Prostate gland (tissue), 2 donors: ENCODE measurements at regions of chr19 and their contacts with region 1.

Region 1: DNA sequence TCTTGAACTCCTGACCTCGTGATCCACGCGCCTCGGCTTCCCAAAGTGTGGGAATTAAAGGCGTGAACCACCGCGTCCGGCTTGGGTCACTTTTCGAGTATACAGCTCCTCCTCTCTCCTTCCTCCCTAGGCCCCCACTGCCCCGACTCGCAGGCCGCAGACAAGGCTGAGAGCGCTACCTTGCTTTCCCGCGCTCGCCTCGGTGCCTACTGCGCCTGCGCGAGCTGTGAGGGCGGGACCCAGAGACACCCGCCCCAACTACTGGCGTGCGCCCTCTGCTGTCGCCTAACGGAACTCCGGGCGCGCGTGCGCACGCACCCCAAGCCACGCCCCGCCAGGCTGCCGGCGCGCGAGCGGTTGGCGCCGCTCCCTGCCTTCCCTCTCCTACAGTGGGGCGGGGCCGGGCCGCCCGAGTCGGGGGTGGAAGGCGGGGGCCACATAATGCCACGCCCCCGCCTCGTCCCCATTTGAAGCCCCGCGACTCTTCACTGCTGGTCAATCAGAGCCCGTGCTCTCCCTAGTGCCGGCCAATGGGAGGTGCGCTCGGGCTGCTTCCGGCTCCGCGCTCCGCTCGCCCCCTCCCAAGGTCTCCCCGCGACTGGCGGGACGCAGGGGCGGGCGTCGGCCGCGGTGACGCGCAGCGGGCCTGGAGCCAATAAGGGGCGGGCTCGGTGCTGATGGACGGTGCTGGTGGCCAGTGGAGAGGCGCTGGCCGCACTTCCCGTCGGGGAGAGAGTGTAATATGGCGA is at the start of gene RAB8A:
- DNase-seq: peak; percentile 99
- H3K4me3 ChIP-seq: peak within 1 kb of the TSS; percentile 97
- H3K27ac ChIP-seq: peak within 1 kb of the TSS; percentile 93 to 98
- H3K4me1 ChIP-seq: peaks cover 5% of the 10 kb centered on the region
- H3K27me3 ChIP-seq: no peaks in the 10 kb centered on the region
- CTCF ChIP-seq: peak; percentile 92 to 100 (median 99)
- POLR2A ChIP-seq: peak; percentile 7
- total RNA-seq, gene RAB8A: 67.8 to 70.5 TPM

Region 2: GRCh38 chr19:15684831-15685230 is 426.5 kb before region 1 on chr19:
- intact Hi-C with region 1: no loop called
- DNase-seq: no peak
- H3K4me3 ChIP-seq: no peak overlapping the region
- H3K27ac ChIP-seq: no peak overlapping the region
- H3K4me1 ChIP-seq: no peaks in the 10 kb centered on the region
- H3K27me3 ChIP-seq: no peaks in the 10 kb centered on the region
- CTCF ChIP-seq: no peak
- POLR2A ChIP-seq: no peak

Region 3: GRCh38 chr19:16041299-16041990 is 69.9 kb before region 1 on chr19:
- intact Hi-C with region 1: loop called (anchors 2 kb)
- DNase-seq: peak; percentile 79
- H3K4me3 ChIP-seq: no peak overlapping the region
- H3K27ac ChIP-seq: no peak overlapping the region
- H3K4me1 ChIP-seq: no peaks in the 10 kb centered on the region
- H3K27me3 ChIP-seq: no peaks in the 10 kb centered on the region
- CTCF ChIP-seq: peak; percentile 91 to 98 (median 97)
- POLR2A ChIP-seq: no peak

Region 4: GRCh38 chr19:16052353-16052752 is 59.0 kb before region 1 on chr19:
- intact Hi-C with region 1: no loop called
- DNase-seq: no peak
- H3K4me3 ChIP-seq: no peak overlapping the region
- H3K27ac ChIP-seq: no peak overlapping the region
- H3K4me1 ChIP-seq: no peaks in the 10 kb centered on the region
- H3K27me3 ChIP-seq: no peaks in the 10 kb centered on the region
- CTCF ChIP-seq: no peak
- POLR2A ChIP-seq: no peak

Region 5: DNA sequence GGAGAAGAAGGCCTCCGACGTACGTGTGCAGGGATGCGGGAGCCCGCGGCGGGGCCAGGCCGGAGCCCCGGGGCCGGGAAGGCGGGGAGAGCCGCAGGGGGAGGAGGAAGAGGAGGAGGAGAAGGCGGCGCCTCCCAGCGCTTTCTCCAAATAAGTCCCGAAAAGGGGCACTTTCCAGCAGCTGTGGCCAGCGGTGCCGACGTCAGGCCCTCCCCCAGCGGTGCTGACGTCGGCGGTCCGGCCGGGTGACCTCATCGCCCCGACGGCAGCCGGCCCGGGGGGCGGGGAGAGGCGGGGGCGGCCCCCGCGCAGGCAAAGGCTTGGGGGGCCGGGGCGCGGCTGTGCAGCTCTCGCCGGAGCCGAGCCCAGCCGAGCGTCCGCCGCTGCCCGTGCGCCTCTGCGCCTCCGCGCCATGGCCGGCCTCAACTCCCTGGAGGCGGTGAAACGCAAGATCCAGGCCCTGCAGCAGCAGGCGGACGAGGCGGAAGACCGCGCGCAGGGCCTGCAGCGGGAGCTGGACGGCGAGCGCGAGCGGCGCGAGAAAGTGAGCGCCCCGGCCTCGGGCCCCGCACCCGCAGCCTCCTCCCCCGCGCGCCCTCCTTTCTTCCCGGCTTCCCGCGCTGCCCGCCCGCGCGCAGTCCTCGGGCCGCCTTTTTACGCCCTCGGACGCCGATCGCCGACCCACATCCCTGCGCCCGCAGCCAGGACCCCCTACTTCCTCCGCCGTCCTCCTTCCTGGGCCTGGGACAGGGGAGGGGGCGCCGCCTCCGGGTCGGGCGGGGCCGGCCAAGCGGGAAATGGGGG is 35.0 kb before region 1 on chr19 and contains the start of gene TPM4:
- intact Hi-C with region 1: loop called (anchors 5 kb)
- DNase-seq: peak; percentile 90
- H3K4me3 ChIP-seq: peak within 1 kb of the TSS; percentile 94
- H3K27ac ChIP-seq: peak within 1 kb of the TSS; percentile 100
- H3K4me1 ChIP-seq: peaks cover 5% of the 10 kb centered on the region
- H3K27me3 ChIP-seq: no peaks in the 10 kb centered on the region
- CTCF ChIP-seq: peak in 2 of 4 experiments; percentile 12
- POLR2A ChIP-seq: peak; percentile 78
- total RNA-seq, gene TPM4: 379 TPM

Region 6: DNA sequence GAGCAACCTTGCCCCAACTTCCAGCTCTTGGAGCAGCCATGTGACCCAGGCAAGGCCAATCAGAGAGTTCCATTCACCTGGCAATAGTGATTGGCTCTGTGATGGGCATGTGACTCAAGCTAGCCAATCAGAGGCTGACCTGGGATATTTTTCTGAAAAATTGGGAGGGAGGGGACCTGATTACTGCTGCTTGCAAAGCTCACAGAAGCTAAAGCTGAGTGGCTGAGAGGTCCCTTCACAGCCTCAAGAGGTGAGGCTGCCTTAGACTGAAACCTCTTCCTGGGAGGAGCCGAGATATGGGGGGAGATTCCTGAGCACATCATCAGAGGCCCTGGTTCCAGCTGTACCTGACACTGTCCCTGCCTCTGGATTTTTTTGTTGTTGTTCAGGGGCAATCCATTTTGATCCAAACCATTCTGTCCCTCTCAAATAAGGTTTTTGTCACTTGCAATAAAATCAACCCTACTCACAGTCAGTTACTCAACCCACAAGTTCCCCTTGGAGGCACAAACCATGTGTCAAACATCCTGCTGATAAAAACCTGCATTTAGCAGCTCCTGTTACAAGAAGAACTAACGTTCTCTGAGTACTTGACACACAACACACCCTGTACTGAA is 57.2 kb after region 1 on chr19:
- intact Hi-C with region 1: no loop called
- DNase-seq: no peak
- H3K4me3 ChIP-seq: no peak overlapping the region
- H3K27ac ChIP-seq: no peak overlapping the region
- H3K4me1 ChIP-seq: no peaks in the 10 kb centered on the region
- H3K27me3 ChIP-seq: no peaks in the 10 kb centered on the region
- CTCF ChIP-seq: no peak
- POLR2A ChIP-seq: no peak